Dendritic cell treated with granulocyte-macrophage colony-stimulating factor and Interleukin-4, amounts not matched to agents 40 ng/mL and 50 ng/mL, for 4 days (primary cell): ENCODE measurements at regions of chr17 and their contacts with region 1.

Region 1: GRCh38 chr17:35448214-35448898 is at the start of gene SLFN13:
- H3K4me3 Mint-ChIP-seq: peak within 1 kb of the TSS; percentile 71
- H3K27ac Mint-ChIP-seq: peak within 1 kb of the TSS; percentile 76
- H3K4me1 Mint-ChIP-seq: peaks cover 30% of the 10 kb centered on the region
- H3K27me3 Mint-ChIP-seq: peaks cover 31% of the 10 kb centered on the region

Region 2: GRCh38 chr17:35235917-35236316 is 212.4 kb before region 1 on chr17:
- intact Hi-C with region 1: no loop called
- H3K4me3 Mint-ChIP-seq: no peak overlapping the region
- H3K27ac Mint-ChIP-seq: no peak overlapping the region
- H3K4me1 Mint-ChIP-seq: peaks cover 7% of the 10 kb centered on the region
- H3K27me3 Mint-ChIP-seq: peaks cover 19% of the 10 kb centered on the region

Region 3: DNA sequence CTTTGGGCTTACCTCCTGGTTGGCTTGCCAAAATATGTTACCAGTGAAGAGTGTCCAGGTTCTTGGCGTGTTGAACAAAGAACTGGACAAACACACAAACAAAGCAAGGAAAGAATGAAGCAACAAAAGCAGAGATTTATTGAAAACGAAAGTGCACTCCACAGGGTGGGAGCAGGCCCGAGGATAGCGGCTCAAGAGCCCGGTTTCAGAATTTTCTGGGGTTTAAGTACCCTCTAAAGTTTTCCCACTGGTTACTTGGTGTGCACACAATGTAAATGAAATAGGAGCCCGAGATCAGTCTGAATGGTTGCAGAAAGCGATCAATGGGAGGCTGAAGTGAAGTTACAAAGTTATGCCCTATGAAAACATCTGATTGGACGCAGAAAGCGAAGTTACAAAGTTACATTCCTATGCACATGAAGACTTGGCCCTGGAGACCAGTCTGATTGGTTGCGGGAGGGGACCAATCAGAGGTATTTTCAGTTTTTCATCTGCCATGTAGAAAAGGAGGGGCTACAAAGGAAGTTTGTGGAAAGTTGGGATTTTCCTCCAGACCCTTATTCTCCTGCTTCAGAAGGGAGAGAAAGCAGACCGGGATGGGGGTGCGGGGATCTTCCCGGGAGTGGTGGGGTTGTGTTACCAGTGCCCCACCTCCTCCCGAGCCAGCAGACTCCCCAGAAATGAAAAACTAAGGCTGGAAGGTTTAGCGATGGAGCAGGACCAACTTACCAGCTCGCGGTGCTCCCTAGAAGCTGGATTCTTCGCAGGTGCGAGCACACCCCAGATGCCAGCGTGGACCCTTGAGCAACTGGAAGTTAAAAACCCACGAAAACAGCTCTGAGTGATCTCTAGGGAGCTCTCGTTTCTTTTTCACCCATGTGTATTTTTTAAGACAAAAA is 15.9 kb before region 1 on chr17 and contains the start of gene SLFN12:
- intact Hi-C with region 1: loop called (anchors 2 kb)
- H3K4me3 Mint-ChIP-seq: peak within 1 kb of the TSS; percentile 86
- H3K27ac Mint-ChIP-seq: peak within 1 kb of the TSS; percentile 89
- H3K4me1 Mint-ChIP-seq: peaks cover 58% of the 10 kb centered on the region
- H3K27me3 Mint-ChIP-seq: no peaks in the 10 kb centered on the region

Region 4: GRCh38 chr17:35486920-35487732 is 38.8 kb after region 1 on chr17:
- intact Hi-C with region 1: loop called (anchors 5 kb)
- H3K4me3 Mint-ChIP-seq: peak overlapping the region; percentile 78
- H3K27ac Mint-ChIP-seq: peak overlapping the region; percentile 83
- H3K4me1 Mint-ChIP-seq: peaks cover 48% of the 10 kb centered on the region
- H3K27me3 Mint-ChIP-seq: peaks cover 84% of the 10 kb centered on the region